Right cardiac atrium (tissue), 5 donors: ENCODE measurements at regions of chr5 and their contacts with region 1.

Region 1: DNA sequence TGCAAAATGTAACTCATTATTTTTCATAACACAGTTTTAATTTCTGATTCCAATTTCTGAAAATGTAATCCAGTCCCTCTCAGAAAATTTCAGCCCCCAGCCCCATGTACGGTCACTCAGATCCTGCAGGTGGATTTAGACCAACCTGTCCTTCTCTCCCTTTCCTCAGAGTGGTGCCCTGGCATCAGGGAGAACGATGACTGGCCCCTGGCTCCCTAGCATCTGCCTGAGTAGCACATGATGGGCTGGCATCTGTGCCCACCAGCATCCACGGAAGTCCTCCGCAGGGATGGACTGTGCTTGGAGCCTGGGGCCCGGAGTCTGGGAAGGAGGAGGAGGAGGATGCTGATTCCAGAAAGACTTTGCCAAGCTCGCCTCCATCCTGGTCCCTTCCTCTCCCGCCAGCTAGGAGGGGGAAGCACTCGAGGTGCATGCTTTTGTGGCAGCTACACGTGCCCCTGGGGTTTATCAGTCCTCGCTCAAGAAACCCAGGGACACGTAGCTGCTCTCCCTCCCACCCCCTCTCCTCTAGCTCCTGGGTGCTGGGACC is 54.4 kb upstream of the RUFY1 start:
- DNase-seq: no peak
- ATAC-seq: no peak
- H3K4me3 ChIP-seq: no peak overlapping the region
- H3K27ac ChIP-seq: no peak overlapping the region
- H3K4me1 ChIP-seq: no peaks in the 10 kb centered on the region
- H3K27me3 ChIP-seq: no peaks in the 10 kb centered on the region

Region 2: GRCh38 chr5:178793151-178793550 is 702.8 kb before region 1 on chr5:
- intact Hi-C with region 1: loop called in 1 of 4 experiments (anchors 10 kb)
- DNase-seq: no peak
- ATAC-seq: no peak
- H3K4me3 ChIP-seq: no peak overlapping the region
- H3K27ac ChIP-seq: no peak overlapping the region
- H3K4me1 ChIP-seq: no peaks in the 10 kb centered on the region
- H3K27me3 ChIP-seq: no peaks in the 10 kb centered on the region

Region 3: DNA sequence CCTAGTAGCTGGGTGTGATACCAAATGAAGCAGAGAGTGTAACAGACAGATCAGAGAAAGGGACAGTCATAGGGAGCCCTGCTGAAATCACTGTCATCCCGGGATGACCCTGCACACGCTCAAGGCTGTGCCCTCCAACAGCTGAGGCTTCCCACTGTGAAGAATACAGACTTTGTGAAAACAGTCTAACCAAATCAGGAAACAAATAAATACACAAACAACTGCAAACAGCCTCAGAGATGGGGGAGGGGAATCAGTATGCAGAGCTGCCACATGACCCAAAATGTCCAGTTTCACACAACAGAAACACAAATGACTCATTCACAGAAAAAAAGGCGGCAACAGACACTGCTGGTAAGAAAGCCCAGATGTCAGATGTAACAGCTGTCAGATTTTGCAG is 252.6 kb before region 1 on chr5:
- intact Hi-C with region 1: no loop called
- DNase-seq: peak in 1 of 3 donors; percentile 5
- ATAC-seq: peak in 1 of 2 donors; percentile 56
- H3K4me3 ChIP-seq: no peak overlapping the region
- H3K27ac ChIP-seq: no peak overlapping the region
- H3K4me1 ChIP-seq: peaks cover 2% of the 10 kb centered on the region
- H3K27me3 ChIP-seq: no peaks in the 10 kb centered on the region

Region 4: DNA sequence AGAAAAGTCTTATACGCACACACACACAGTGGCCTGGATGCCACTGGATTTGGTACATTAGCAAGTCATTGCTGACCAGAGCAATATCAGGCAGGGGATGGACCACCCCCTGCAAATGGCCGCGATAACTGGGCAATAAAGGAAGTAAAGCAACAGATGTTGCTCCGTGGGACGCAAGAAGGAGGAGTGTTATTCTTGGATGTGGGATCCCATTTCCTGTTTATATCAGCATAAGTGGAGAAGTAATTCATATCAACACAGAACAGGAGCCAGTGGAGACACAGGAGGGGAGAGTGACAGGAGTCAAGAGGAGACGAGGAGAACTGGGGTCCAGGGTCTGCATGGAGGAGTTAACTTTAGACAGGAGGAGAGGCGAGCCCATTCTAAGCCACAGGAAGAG is 72.7 kb after region 1 on chr5:
- intact Hi-C with region 1: no loop called
- DNase-seq: no peak
- ATAC-seq: peak; percentile 56 to 68
- H3K4me3 ChIP-seq: no peak overlapping the region
- H3K27ac ChIP-seq: no peak overlapping the region
- H3K4me1 ChIP-seq: no peaks in the 10 kb centered on the region
- H3K27me3 ChIP-seq: no peaks in the 10 kb centered on the region